ENCODE measurements at regions of chr7 and their contacts with region 1.

Region 1: DNA sequence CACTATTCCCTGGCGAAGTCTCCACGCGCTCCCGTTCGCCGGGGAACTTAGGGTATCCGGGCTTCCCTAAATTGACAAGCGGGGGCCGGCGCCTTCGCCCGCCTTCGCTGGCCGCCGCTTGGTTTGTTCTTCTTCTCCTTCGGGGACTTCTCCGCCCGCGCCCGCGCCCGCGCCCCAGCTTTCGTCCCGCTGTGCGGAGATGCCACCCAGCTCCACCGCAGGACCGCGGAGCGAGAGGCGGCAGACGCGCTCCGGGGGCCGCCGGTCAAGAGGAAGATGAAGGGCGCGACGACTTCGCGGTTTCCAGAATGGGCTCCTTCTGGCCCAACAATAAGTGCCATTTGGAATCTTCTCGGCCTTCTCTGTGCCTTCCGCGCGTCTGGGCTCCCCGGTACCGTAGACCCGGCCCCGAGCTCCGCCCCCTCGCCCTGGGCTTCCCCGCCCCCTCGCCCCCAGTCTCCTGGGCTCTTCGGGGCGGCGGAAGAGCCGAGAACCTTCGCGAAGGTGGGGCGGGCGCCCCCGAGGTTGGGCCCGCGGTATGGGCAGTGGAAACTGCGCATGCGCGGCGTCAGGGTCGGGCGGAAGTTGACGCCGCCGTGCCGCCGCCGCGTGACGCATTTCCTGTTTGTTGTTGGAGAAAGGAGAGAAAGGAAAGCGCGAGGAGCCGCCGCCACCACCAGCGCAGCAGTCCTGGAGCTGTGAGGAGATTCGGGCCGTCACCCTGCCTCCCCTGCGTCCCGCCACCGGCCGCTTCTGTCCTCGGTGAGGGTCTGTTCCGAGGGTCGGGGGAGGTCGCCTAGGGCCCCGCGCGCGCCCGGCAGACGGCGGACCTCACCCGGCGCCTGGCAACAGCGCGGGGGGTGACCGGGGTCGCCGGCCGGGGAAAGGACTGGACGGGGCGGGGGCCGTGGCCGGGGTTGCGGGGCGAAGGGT is at the start of gene DNAJB6:
- DNase-seq: peak; percentile 78 to 98
- H3K4me3 ChIP-seq: peak within 1 kb of the TSS; percentile 92 to 99 (median 94)
- H3K27ac ChIP-seq: peak within 1 kb of the TSS; percentile 91
- H3K4me1 ChIP-seq: peaks cover 2 to 11% (median 6%) of the 10 kb centered on the region in 4 experiments
- H3K27me3 ChIP-seq: no peaks in the 10 kb centered on the region
- CTCF ChIP-seq: no peak
- EP300 ChIP-seq: peak in 1 of 2 experiments; percentile 68; a peak in 1 of 3 replicates
- POLR2A ChIP-seq: peak; percentile 61 to 86
- RAD21 ChIP-seq: no peak
- total RNA-seq, gene DNAJB6: 270 and 295 TPM in 2 replicates

Region 2: GRCh38 chr7:157273208-157274093 is 63.2 kb before region 1 on chr7:
- CTCF ChIA-PET with region 1: interaction called, 11 read pairs
- POLR2A ChIA-PET with region 1: interaction called, 10 read pairs
- DNase-seq: peak; percentile 72 to 92
- H3K4me3 ChIP-seq: no peak overlapping the region
- H3K27ac ChIP-seq: no peak overlapping the region
- H3K4me1 ChIP-seq: peaks cover 0 to 7% (median 1%) of the 10 kb centered on the region in 4 experiments; a peak in 5 of 7 replicates
- H3K27me3 ChIP-seq: no peaks in the 10 kb centered on the region
- CTCF ChIP-seq: peak in 2 of 3 experiments; percentile 97 to 98; a peak in 3 of 4 replicates
- EP300 ChIP-seq: no peak
- POLR2A ChIP-seq: no peak
- RAD21 ChIP-seq: peak; percentile 98

Region 3: GRCh38 chr7:157309990-157310668 is 26.5 kb before region 1 on chr7:
- CTCF ChIA-PET with region 1: interaction called, 13 read pairs
- POLR2A ChIA-PET with region 1: interaction called, 88 read pairs
- DNase-seq: peak; percentile 71 to 94
- H3K4me3 ChIP-seq: peak overlapping the region in 2 of 4 experiments; percentile 2 to 33; a peak in 2 of 8 replicates
- H3K27ac ChIP-seq: peak overlapping the region; percentile 96
- H3K4me1 ChIP-seq: peaks cover 12 to 26% (median 23%) of the 10 kb centered on the region in 4 experiments
- H3K27me3 ChIP-seq: no peaks in the 10 kb centered on the region
- CTCF ChIP-seq: no peak
- EP300 ChIP-seq: peak in 1 of 2 experiments; percentile 99; a peak in 2 of 3 replicates
- POLR2A ChIP-seq: peak in 1 of 2 experiments; percentile 72; a peak in 1 of 3 replicates
- RAD21 ChIP-seq: peak in 1 of 2 experiments; percentile 7; a peak in 1 of 4 replicates

Region 4: GRCh38 chr7:157323419-157323818 is 13.2 kb before region 1 on chr7:
- CTCF ChIA-PET with region 1: interaction called, 26 read pairs
- POLR2A ChIA-PET with region 1: interaction called, 62 read pairs
- DNase-seq: no peak
- H3K4me3 ChIP-seq: no peak overlapping the region
- H3K27ac ChIP-seq: no peak overlapping the region
- H3K4me1 ChIP-seq: peaks cover 0 to 3% (median 2%) of the 10 kb centered on the region in 4 experiments; a peak in 5 of 7 replicates
- H3K27me3 ChIP-seq: no peaks in the 10 kb centered on the region
- CTCF ChIP-seq: no peak
- EP300 ChIP-seq: no peak
- POLR2A ChIP-seq: no peak
- RAD21 ChIP-seq: no peak

Region 5: GRCh38 chr7:157357129-157358040 is 20.7 kb after region 1 on chr7:
- CTCF ChIA-PET with region 1: interaction called, 11 read pairs
- POLR2A ChIA-PET with region 1: interaction called, 22 read pairs
- DNase-seq: no peak
- H3K4me3 ChIP-seq: no peak overlapping the region
- H3K27ac ChIP-seq: no peak overlapping the region; the same call in 1 of the 2 replicates
- H3K4me1 ChIP-seq: peaks cover 2 to 17% (median 16%) of the 10 kb centered on the region in 4 experiments
- H3K27me3 ChIP-seq: no peaks in the 10 kb centered on the region
- CTCF ChIP-seq: no peak
- EP300 ChIP-seq: no peak
- POLR2A ChIP-seq: no peak
- RAD21 ChIP-seq: no peak